ENCODE measurements at regions of chr13 and their contacts with region 1.

Region 1: GRCh38 chr13:19601749-19602725 is 31.4 kb upstream of the MPHOSPH8 start:
- DNase-seq: peak; percentile 27
- ATAC-seq: peak; percentile 85
- H3K4me3 ChIP-seq: peak overlapping the region; percentile 69
- H3K27ac ChIP-seq: peak overlapping the region; percentile 57; the same call in 1 of the 2 replicates
- H3K4me1 ChIP-seq: no peaks in the 10 kb centered on the region
- H3K27me3 ChIP-seq: no peaks in the 10 kb centered on the region
- CTCF ChIP-seq: peak; percentile 24; the same call in 1 of the 2 replicates
- POLR2A ChIP-seq: no peak
- RAD21 ChIP-seq: no peak

Region 2: DNA sequence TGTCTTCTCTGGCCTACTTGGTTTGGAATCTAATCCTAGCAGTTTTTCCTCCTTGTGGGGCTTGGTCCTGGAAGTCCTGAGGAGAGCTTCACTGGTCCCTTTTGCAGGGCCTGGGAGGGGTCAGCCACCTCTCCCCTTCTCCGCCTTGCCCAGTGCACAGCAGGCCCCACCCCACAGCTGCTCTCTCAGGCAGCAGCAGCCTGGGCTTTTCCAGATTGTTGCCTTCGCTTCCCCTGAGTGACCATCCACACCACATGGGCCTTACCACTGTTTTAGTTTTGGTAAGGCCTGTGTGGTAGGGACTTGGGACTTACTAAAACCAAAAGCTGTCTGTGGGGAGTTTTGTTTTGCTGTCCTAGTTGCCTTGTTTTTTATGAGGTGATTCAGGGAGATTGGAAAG is 43.0 kb after region 1 on chr13:
- CTCF ChIA-PET with region 1: no interaction called
- POLR2A ChIA-PET with region 1: no interaction called
- dilution Hi-C with region 1: no loop called
- in situ Hi-C with region 1: no loop called
- intact Hi-C with region 1: no loop called
- DNase-seq: no peak
- ATAC-seq: no peak
- H3K4me3 ChIP-seq: no peak overlapping the region
- H3K27ac ChIP-seq: no peak overlapping the region
- H3K4me1 ChIP-seq: 0 out of 2 replicates have a peak, but pooled peaks cover 2% of the 10 kb centered on the region
- H3K27me3 ChIP-seq: no peaks in the 10 kb centered on the region
- CTCF ChIP-seq: no peak
- POLR2A ChIP-seq: no peak
- RAD21 ChIP-seq: no peak

Region 3: GRCh38 chr13:19810996-19811891 is 209.2 kb after region 1 on chr13:
- CTCF ChIA-PET with region 1: no interaction called
- POLR2A ChIA-PET with region 1: interaction called, 23 read pairs
- dilution Hi-C with region 1: no loop called
- in situ Hi-C with region 1: no loop called
- intact Hi-C with region 1: no loop called
- DNase-seq: peak; percentile 22
- ATAC-seq: peak; percentile 65
- H3K4me3 ChIP-seq: no peak overlapping the region
- H3K27ac ChIP-seq: no peak overlapping the region
- H3K4me1 ChIP-seq: no peaks in the 10 kb centered on the region
- H3K27me3 ChIP-seq: no peaks in the 10 kb centered on the region
- CTCF ChIP-seq: no peak
- POLR2A ChIP-seq: no peak
- RAD21 ChIP-seq: no peak

Region 4: GRCh38 chr13:19890030-19890429 is 288.0 kb after region 1 on chr13:
- CTCF ChIA-PET with region 1: no interaction called
- POLR2A ChIA-PET with region 1: no interaction called
- dilution Hi-C with region 1: no loop called
- in situ Hi-C with region 1: no loop called
- intact Hi-C with region 1: loop called (anchors 10 kb)
- DNase-seq: no peak
- ATAC-seq: no peak
- H3K4me3 ChIP-seq: no peak overlapping the region
- H3K27ac ChIP-seq: no peak overlapping the region
- H3K4me1 ChIP-seq: no peaks in the 10 kb centered on the region
- H3K27me3 ChIP-seq: no peaks in the 10 kb centered on the region
- CTCF ChIP-seq: no peak
- POLR2A ChIP-seq: no peak
- RAD21 ChIP-seq: no peak